ENCODE measurements at regions of chr18 and their contacts with region 1.

Region 1: GRCh38 chr18:49486953-49487710 is at the start of gene C18orf32:
- DNase-seq: peak; percentile 98
- H3K4me3 ChIP-seq: peak within 1 kb of the TSS; percentile 67 to 92 (median 86)
- H3K27ac ChIP-seq: peak within 1 kb of the TSS; percentile 93 to 98 (median 96)
- H3K4me1 ChIP-seq: peaks cover 0 to 46% (median 37%) of the 10 kb centered on the region in 4 donors
- H3K27me3 ChIP-seq: no peaks in the 10 kb centered on the region
- CTCF ChIP-seq: no peak
- EP300 ChIP-seq: no peak
- POLR2A ChIP-seq: peak; percentile 92 to 94
- total RNA-seq, gene C18orf32: 29.1 to 57.8 (median 45.8) TPM

Region 2: GRCh38 chr18:48834413-48835031 is 652.6 kb before region 1 on chr18:
- intact Hi-C with region 1: no loop called
- DNase-seq: peak; percentile 89
- H3K4me3 ChIP-seq: no peak overlapping the region
- H3K27ac ChIP-seq: peak overlapping the region in 1 of 4 donors; percentile 9
- H3K4me1 ChIP-seq: peaks cover 0 to 33% (median 7%) of the 10 kb centered on the region in 4 donors
- H3K27me3 ChIP-seq: no peaks in the 10 kb centered on the region
- CTCF ChIP-seq: no peak
- EP300 ChIP-seq: peak in 1 of 4 donors; percentile 12
- POLR2A ChIP-seq: no peak

Region 3: DNA sequence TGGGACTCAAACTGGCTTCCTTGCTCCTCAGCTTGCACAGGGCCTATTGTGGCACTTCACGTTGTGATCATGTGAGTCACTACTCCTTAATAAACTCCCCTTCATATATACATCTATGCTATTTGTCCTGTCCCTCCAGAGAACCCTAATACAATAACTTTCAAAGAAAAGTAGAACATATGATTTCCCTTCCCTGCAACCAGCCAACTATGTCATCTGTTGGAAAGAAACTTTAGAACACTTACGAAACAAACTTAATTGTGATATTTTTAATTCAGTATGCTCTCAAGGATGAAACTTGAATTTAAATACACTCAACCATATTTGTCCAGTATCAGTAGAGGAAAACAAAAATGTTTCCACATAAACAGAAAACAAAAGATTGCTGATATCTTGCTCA is 111.1 kb before region 1 on chr18:
- intact Hi-C with region 1: no loop called
- DNase-seq: no peak
- H3K4me3 ChIP-seq: no peak overlapping the region
- H3K27ac ChIP-seq: no peak overlapping the region
- H3K4me1 ChIP-seq: no peaks in the 10 kb centered on the region
- H3K27me3 ChIP-seq: no peaks in the 10 kb centered on the region
- CTCF ChIP-seq: no peak
- EP300 ChIP-seq: no peak
- POLR2A ChIP-seq: no peak

Region 4: DNA sequence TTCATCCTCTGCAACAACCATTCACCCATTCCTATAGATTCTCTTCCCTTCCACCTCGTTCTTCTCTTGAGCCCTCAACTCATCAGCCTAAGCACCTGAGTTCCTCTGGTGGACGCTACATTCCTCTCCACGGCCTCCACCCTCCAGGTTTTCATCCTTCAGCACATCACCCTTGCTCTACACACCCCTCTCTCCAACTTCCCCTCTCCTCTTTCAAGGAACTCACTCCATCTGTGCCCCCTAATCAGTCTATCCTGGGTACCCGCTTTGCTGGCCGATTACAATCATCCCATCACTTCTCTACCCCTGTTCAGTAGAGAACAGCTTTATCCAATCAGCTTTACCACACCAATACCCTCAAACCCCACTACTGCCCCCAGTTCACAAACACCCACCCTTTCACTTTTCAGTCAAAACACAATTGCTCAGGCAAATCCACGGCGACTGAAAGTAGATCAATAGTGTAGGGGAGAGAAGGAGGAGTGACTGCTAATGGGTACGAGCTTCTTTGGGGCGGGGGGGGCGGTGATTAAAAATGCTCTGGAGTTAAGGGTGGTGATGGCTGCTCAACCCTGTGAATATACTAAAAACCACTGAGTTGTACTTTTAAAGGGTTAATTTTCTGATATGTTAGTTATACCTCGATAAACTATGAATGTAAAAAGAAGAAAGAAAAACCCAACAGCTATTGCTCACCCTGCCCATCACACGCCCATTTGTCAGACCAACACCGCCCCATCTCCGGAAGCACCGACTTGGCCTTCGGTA is 27.5 kb before region 1 on chr18:
- intact Hi-C with region 1: loop called (anchors 2 kb)
- DNase-seq: no peak
- H3K4me3 ChIP-seq: peak overlapping the region; percentile 68 to 91 (median 80)
- H3K27ac ChIP-seq: peak overlapping the region; percentile 86 to 89 (median 87)
- H3K4me1 ChIP-seq: peaks cover 0 to 30% (median 18%) of the 10 kb centered on the region in 4 donors
- H3K27me3 ChIP-seq: no peaks in the 10 kb centered on the region
- CTCF ChIP-seq: no peak
- EP300 ChIP-seq: no peak
- POLR2A ChIP-seq: no peak

Region 5: DNA sequence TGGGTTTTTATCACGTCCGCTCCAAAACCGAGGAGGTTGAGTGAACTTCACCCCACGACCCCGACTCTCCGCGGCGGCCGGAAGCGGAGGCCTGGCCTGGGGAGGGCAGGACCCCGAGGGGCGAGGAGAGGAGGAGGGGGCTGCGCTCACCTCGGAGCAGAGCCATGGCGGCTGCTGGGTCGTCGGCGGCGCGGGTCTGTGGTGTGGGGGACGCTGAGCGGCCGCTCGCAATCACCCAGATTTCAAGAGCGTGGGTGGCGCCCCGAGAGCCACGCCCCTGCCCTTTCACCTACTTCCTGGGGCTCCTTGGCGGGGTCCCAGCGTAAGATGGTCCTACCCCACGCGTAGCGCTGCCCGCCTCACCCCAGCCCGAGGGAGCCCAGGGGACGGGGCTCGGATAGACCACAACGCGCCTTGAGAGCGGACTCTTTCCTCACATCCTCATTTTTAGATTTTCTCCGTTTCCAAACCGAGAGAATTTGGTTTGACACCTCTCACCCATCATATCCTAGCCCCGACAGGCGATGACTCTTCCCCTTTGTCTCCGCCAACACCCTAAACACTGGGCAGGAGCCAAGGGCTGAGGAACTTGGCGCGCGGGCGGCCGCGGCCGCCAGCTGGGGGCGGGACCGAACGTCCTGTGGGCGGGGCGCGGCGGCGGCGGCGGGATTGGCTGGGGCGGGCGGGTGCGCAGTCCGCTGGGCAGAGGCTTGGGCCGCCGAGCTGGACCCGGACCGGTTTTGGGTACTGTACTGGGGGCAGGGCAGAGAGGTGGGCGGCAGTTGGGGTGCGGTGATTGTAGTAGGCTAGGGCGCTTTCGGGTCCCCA is 326.4 kb after region 1 on chr18 and contains the start of gene ACAA2:
- intact Hi-C with region 1: loop called (anchors 2 kb)
- DNase-seq: peak; percentile 95
- H3K4me3 ChIP-seq: peak within 1 kb of the TSS; percentile 71 to 89 (median 82)
- H3K27ac ChIP-seq: peak within 1 kb of the TSS; percentile 91 to 96 (median 94)
- H3K4me1 ChIP-seq: peaks cover 0 to 28% (median 23%) of the 10 kb centered on the region in 4 donors
- H3K27me3 ChIP-seq: no peaks in the 10 kb centered on the region
- CTCF ChIP-seq: no peak
- EP300 ChIP-seq: no peak
- POLR2A ChIP-seq: peak; percentile 55 to 72
- total RNA-seq, gene ACAA2: 61.8 to 87.7 (median 63.2) TPM

Region 6: GRCh38 chr18:50281295-50281971 is 794.3 kb after region 1 on chr18 and contains the start of gene MBD1:
- intact Hi-C with region 1: loop called (anchors 5 kb)
- DNase-seq: peak; percentile 99
- H3K4me3 ChIP-seq: peak within 1 kb of the TSS; percentile 74 to 99 (median 92)
- H3K27ac ChIP-seq: peak within 1 kb of the TSS; percentile 93 to 96 (median 94)
- H3K4me1 ChIP-seq: peaks cover 0 to 34% (median 29%) of the 10 kb centered on the region in 4 donors
- H3K27me3 ChIP-seq: no peaks in the 10 kb centered on the region
- CTCF ChIP-seq: peak in 2 of 4 experiments; percentile 12 to 20
- EP300 ChIP-seq: no peak
- POLR2A ChIP-seq: peak; percentile 91
- total RNA-seq, gene MBD1: 58.9 to 93.6 (median 75.5) TPM

Region 7: DNA sequence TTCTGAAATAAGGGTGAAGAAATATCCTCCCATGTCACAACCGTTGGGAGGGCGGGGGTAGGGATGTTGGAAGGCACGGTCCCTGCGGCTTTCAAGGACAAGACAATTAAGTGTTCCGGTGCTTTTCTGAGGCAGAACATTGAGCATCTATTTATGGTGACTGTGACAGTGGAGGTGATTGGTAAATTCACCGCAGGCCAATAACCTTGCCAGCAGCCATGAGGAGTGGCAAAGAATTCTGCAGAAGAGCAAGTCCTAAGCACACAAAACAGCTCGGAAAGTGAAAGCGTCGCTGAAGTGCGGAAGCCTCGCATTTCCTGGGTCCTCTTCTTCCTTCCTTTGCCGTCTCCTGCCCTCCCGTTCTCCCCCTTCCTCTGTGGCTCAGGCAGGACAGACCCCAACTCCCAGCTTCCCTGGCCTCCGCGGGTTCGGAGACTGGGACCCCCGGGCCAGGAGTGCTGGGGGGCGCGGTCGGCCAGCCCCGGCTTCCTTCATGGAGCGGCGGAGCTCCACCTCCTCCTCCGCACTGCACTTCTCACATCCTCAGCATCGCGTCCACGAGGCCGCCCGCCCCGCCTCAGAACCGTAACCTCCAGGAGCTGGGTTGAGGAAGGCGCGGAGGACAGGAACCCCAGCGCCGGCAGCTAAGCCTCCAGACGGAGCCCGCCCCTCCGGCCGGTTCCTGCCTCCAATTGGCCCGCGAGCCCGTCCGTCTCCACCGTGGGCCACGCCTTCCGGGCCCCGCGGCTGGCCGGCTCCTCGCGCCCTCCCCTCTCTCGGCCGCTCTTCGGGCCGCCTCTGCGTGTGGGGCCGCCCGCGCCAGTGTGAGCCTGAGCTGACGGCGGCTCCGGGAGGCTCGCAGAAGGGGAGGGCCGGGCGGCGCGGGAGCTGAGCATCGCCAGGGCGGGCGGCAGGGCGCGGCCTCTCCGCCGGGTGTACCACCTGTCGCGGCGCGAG is 1391.5 kb after region 1 on chr18 and contains the start of gene ME2:
- intact Hi-C with region 1: loop called (anchors 10 kb)
- DNase-seq: peak; percentile 96
- H3K4me3 ChIP-seq: peak within 1 kb of the TSS; percentile 81 to 90 (median 83)
- H3K27ac ChIP-seq: peak within 1 kb of the TSS; percentile 95 to 98 (median 96)
- H3K4me1 ChIP-seq: peaks cover 0 to 20% (median 11%) of the 10 kb centered on the region in 4 donors
- H3K27me3 ChIP-seq: no peaks in the 10 kb centered on the region
- CTCF ChIP-seq: no peak
- EP300 ChIP-seq: no peak
- POLR2A ChIP-seq: peak; percentile 50 to 62
- total RNA-seq, gene ME2: 49.6 to 66.2 (median 62.6) TPM